ENCODE measurements at regions of chr3 and their contacts with region 1.

Region 1: DNA sequence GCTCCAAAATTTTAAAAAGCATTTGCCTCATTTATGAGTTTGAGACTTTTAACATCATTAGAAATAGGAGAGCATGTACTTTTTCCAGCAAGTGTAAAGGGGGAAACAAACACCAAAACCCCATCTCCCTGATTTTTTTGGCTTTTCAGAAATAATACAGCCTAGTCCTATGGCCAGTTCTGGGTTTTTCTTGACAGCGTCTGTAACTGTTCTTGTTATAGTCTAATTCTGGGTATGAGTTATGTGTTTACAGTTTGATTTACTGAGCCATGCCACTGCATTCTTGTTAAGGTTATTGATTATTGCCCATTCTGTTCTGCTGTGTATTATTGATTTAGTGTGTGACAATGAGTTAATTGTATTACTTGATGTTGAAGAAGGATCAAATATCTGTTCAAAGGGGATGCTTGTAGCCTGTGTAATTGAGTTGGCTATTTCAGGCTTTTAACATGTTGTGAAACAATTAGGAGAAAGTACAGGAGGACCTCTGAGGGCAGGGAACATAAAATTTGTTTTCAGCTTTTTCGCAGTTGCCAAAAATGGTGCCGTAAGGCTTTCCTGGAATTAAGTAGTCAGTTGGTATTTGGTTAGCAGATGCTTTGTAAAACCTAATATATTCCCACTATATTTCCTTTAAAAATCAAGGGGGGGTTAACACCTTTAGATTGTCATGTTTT is 46.1 kb downstream of the MBNL1 start:
- DNase-seq: no peak
- ATAC-seq: no peak
- H3K4me3 ChIP-seq: no peak overlapping the region
- H3K4me3 Mint-ChIP-seq: peak overlapping the region in 2 of 3 donors; percentile 2 to 34
- H3K27ac ChIP-seq: no peak overlapping the region
- H3K27ac Mint-ChIP-seq: peak overlapping the region; percentile 38 to 73
- H3K4me1 ChIP-seq: peaks cover 26 to 29% of the 10 kb centered on the region in 2 experiments
- H3K4me1 Mint-ChIP-seq: peaks cover 77 to 82% (median 77%) of the 10 kb centered on the region in 3 donors
- H3K27me3 ChIP-seq: no peaks in the 10 kb centered on the region
- H3K27me3 Mint-ChIP-seq: no peaks in the 10 kb centered on the region

Region 2: GRCh38 chr3:152087153-152087552 is 227.7 kb before region 1 on chr3:
- CTCF ChIA-PET with region 1: no interaction called
- POLR2A ChIA-PET with region 1: no interaction called
- DNase-seq: no peak
- ATAC-seq: no peak
- H3K4me3 ChIP-seq: no peak overlapping the region
- H3K4me3 Mint-ChIP-seq: no peak overlapping the region
- H3K27ac ChIP-seq: no peak overlapping the region
- H3K27ac Mint-ChIP-seq: no peak overlapping the region
- H3K4me1 ChIP-seq: no peaks in the 10 kb centered on the region
- H3K4me1 Mint-ChIP-seq: peaks cover 0 to 3% (median 0%) of the 10 kb centered on the region in 3 donors
- H3K27me3 ChIP-seq: no peaks in the 10 kb centered on the region
- H3K27me3 Mint-ChIP-seq: no peaks in the 10 kb centered on the region

Region 3: GRCh38 chr3:152405915-152406802 is 91.3 kb after region 1 on chr3:
- CTCF ChIA-PET with region 1: interaction called in 1 of 2 experiments, 4 read pairs
- POLR2A ChIA-PET with region 1: interaction called in 1 of 2 experiments, 10 read pairs
- DNase-seq: no peak
- ATAC-seq: no peak
- H3K4me3 ChIP-seq: no peak overlapping the region
- H3K4me3 Mint-ChIP-seq: peak overlapping the region in 1 of 3 donors; percentile 15
- H3K27ac ChIP-seq: peak overlapping the region; percentile 20
- H3K27ac Mint-ChIP-seq: peak overlapping the region; percentile 64 to 77
- H3K4me1 ChIP-seq: peaks cover 14 to 20% of the 10 kb centered on the region in 2 experiments
- H3K4me1 Mint-ChIP-seq: peaks cover 78 to 82% (median 81%) of the 10 kb centered on the region in 3 donors
- H3K27me3 ChIP-seq: no peaks in the 10 kb centered on the region
- H3K27me3 Mint-ChIP-seq: no peaks in the 10 kb centered on the region

Measured in T-cell (primary cell).